ENCODE measurements at regions of chr5 and their contacts with region 1.

Region 1: GRCh38 chr5:158074992-158075769 is 216.2 kb upstream of the CLINT1 start:
- DNase-seq: peak; percentile 60
- H3K4me3 Mint-ChIP-seq: no peak overlapping the region
- H3K27ac Mint-ChIP-seq: no peak overlapping the region
- H3K4me1 Mint-ChIP-seq: no peaks in the 10 kb centered on the region
- H3K27me3 Mint-ChIP-seq: peaks cover 11% of the 10 kb centered on the region

Region 2: GRCh38 chr5:158064334-158065123 is 10.7 kb before region 1 on chr5:
- CTCF ChIA-PET with region 1: interaction called, 23 read pairs
- DNase-seq: no peak
- H3K4me3 Mint-ChIP-seq: no peak overlapping the region
- H3K27ac Mint-ChIP-seq: no peak overlapping the region
- H3K4me1 Mint-ChIP-seq: no peaks in the 10 kb centered on the region
- H3K27me3 Mint-ChIP-seq: peaks cover 7% of the 10 kb centered on the region

Region 3: GRCh38 chr5:158108177-158108576 is 33.0 kb after region 1 on chr5:
- CTCF ChIA-PET with region 1: no interaction called
- DNase-seq: no peak
- H3K4me3 Mint-ChIP-seq: no peak overlapping the region
- H3K27ac Mint-ChIP-seq: no peak overlapping the region
- H3K4me1 Mint-ChIP-seq: no peaks in the 10 kb centered on the region
- H3K27me3 Mint-ChIP-seq: peaks cover 13% of the 10 kb centered on the region